HCT116 (cell line): ENCODE measurements at regions of chr15 and their contacts with region 1.

Region 1: GRCh38 chr15:44130778-44131177 is 64.3 kb downstream of the FRMD5 start:
- DNase-seq: no peak
- ATAC-seq: no peak
- H3K4me3 ChIP-seq: no peak overlapping the region
- H3K27ac ChIP-seq: no peak overlapping the region
- H3K4me1 ChIP-seq: peaks cover 4 to 11% of the 10 kb centered on the region in 2 experiments; a peak in 3 of 4 replicates
- H3K27me3 ChIP-seq: no peaks in the 10 kb centered on the region
- CTCF ChIP-seq: peak in 2 of 3 experiments; percentile 12 to 16; a peak in 1 of 6 replicates
- POLR2A ChIP-seq: no peak
- RAD21 ChIP-seq: peak; percentile 47

Region 2: DNA sequence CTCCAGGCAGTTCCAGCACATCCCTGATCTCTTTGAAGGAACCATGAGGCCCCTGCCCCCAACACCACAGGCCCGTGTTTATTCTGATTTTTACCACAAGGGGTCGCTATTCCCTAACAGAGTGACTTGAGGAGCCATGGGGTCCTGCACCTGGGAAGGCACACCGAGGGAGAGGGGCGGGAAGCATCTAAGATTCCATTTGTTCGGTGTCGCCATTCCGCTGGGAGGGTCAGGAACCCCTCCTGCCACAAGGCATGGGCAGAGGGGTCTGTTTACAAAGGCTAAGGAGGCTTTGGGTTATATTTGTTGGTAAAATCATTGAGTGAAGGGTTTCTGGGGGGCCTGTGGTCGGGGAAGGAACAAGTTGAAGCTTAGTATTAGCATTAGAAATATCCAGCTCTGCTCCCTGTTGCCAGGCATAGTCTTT is 226.9 kb before region 1 on chr15:
- CTCF ChIA-PET with region 1: no interaction called
- POLR2A ChIA-PET with region 1: no interaction called
- RAD21 ChIA-PET with region 1: no interaction called
- intact Hi-C with region 1: loop called (anchors 5 kb)
- DNase-seq: peak; percentile 56
- ATAC-seq: peak; percentile 93
- H3K4me3 ChIP-seq: no peak overlapping the region
- H3K27ac ChIP-seq: no peak overlapping the region
- H3K4me1 ChIP-seq: no peaks in the 10 kb centered on the region; a peak in 2 of 4 replicates
- H3K27me3 ChIP-seq: no peaks in the 10 kb centered on the region
- CTCF ChIP-seq: peak; percentile 76 to 94 (median 82)
- POLR2A ChIP-seq: no peak
- RAD21 ChIP-seq: peak; percentile 95

Region 3: GRCh38 chr15:44394062-44394461 is 263.3 kb after region 1 on chr15:
- CTCF ChIA-PET with region 1: no interaction called
- POLR2A ChIA-PET with region 1: no interaction called
- RAD21 ChIA-PET with region 1: no interaction called
- intact Hi-C with region 1: no loop called
- DNase-seq: no peak
- ATAC-seq: no peak
- H3K4me3 ChIP-seq: no peak overlapping the region
- H3K27ac ChIP-seq: no peak overlapping the region
- H3K4me1 ChIP-seq: no peaks in the 10 kb centered on the region
- H3K27me3 ChIP-seq: no peaks in the 10 kb centered on the region
- CTCF ChIP-seq: no peak
- POLR2A ChIP-seq: no peak
- RAD21 ChIP-seq: no peak